ENCODE measurements at regions of chr7 and their contacts with region 1.

Region 1: GRCh38 chr7:140485500-140486265 is 6.4 kb upstream of the MKRN1 start:
- DNase-seq: no peak
- H3K4me3 ChIP-seq: no peak overlapping the region
- H3K27ac ChIP-seq: no peak overlapping the region
- H3K4me1 ChIP-seq: peaks cover 4% of the 10 kb centered on the region
- H3K27me3 ChIP-seq: no peaks in the 10 kb centered on the region
- CTCF ChIP-seq: no peak

Region 2: DNA sequence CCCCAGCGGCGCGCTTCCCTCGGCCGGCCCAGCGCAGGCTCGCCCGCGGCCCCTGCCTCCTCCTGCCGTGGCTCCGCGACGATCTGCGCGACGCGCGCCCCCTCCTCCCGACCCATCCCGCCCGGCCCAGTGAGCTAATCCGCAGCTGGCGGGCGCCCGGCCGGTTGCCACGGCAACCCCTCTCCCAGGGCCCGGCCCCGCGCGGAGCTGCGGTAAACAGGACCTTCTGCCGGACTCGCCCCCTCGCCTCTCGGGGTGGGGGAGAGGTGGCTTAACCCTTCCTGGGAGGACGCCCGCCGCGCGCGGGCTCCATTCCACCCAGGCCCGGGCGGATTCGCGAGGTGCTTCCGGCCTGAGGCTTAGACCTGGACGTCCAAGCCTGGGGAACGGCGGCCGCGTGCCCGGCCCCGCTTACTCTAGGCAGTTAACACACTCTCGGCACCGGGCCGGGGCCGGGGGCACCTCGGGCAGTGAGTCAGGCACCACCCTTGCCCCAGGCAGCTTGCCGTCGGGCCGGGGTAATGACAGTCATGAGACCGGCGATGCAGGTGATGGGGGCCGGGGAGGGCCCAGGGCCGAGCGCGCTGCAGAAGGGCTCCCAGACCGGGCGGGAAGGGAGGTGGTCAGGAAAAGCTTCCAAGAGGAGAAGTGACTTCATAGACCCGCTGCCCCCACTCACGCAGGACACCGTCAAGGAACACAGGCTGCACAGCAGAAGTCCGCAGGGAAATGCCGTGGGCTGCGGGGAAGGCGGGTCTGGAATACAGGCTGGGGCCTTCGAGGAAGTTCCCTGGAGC is 155.2 kb after region 1 on chr7 and contains the start of gene DENND2A:
- CTCF ChIA-PET with region 1: interaction called, 15 read pairs
- POLR2A ChIA-PET with region 1: no interaction called
- intact Hi-C with region 1: no loop called
- DNase-seq: no peak
- H3K4me3 ChIP-seq: peak within 1 kb of the TSS; percentile 46
- H3K27ac ChIP-seq: no peak within 1 kb of the TSS
- H3K4me1 ChIP-seq: peaks cover 3% of the 10 kb centered on the region
- H3K27me3 ChIP-seq: peaks cover 6% of the 10 kb centered on the region
- CTCF ChIP-seq: no peak
- total RNA-seq, gene DENND2A: 0.49 and 0.87 TPM in 2 replicates

Region 3: DNA sequence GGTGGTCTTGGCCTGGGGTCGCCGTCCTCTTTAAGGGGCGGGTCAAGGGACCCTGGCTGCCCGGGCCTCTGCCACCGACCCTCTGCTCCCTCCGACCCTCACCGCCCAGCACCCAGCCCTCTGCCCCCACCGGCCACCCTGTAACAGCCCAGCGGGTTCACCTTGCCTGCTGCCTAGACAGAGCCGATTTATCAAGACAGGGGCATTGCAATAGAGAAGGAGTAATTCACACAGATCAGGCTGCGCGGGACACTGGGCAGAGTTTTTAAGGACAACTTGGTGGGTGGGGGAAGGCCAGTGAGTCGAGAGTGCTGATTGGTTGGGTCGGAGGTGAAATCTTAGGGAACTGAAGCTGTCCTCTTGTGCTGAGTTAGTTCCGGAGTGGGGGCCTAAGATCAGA is 186.3 kb after region 1 on chr7:
- CTCF ChIA-PET with region 1: no interaction called
- POLR2A ChIA-PET with region 1: no interaction called
- intact Hi-C with region 1: no loop called
- DNase-seq: no peak
- H3K4me3 ChIP-seq: peak overlapping the region; percentile 77
- H3K27ac ChIP-seq: no peak overlapping the region
- H3K4me1 ChIP-seq: peaks cover 12% of the 10 kb centered on the region
- H3K27me3 ChIP-seq: no peaks in the 10 kb centered on the region
- CTCF ChIP-seq: no peak

Measured in A673 (cell line).